Esophagus muscularis mucosa (tissue), 4 donors: ENCODE measurements at regions of chr19 and their contacts with region 1.

Region 1: GRCh38 chr19:53879140-53880081 is 2.6 kb upstream of the PRKCG start:
- DNase-seq: peak; percentile 96
- H3K4me3 ChIP-seq: peak overlapping the region; percentile 49 to 62 (median 52)
- H3K27ac ChIP-seq: no peak overlapping the region
- H3K4me1 ChIP-seq: peaks cover 28 to 72% (median 54%) of the 10 kb centered on the region in 4 donors
- H3K27me3 ChIP-seq: peaks cover 4 to 50% (median 30%) of the 10 kb centered on the region in 4 donors
- CTCF ChIP-seq: peak in 1 of 3 experiments; percentile 8
- EP300 ChIP-seq: no peak
- POLR2A ChIP-seq: no peak

Region 2: DNA sequence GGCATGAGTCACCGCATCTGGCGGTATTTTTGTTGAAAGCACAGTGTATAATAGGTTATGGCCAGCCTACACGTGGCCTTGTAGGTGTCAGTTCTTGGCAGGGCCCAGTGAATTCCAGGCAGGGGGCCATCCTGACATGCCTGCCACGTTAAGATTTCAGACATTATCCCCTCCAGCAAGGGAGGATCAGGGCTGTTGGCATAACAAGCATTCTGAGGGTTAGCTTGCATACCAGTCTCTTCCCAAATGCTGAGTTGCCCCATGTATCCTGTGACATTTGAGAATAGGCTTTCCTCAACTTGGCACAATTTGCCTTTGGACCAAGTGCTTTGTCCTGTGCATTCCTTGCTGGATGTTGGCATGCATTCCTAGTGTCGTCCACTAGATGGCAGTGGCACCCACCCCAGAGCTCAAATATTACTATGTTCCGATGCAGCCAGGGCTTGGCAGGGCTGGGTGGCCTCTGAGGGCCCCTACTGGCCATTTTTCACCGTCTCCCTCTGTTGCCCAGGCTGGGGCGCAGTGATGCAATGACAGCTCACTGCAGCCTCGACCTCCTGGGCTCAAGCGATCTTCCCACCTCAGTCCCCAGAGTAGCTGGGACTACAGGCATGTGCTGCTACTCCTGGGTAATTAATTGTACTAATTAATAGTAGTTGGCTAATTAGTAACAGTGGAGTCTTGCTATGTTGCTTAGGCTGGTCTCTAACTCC is 86.5 kb before region 1 on chr19:
- intact Hi-C with region 1: no loop called
- DNase-seq: peak; percentile 94
- H3K4me3 ChIP-seq: no peak overlapping the region
- H3K27ac ChIP-seq: no peak overlapping the region
- H3K4me1 ChIP-seq: peaks cover 0 to 8% (median 0%) of the 10 kb centered on the region in 4 donors
- H3K27me3 ChIP-seq: peaks cover 0 to 9% (median 0%) of the 10 kb centered on the region in 4 donors
- CTCF ChIP-seq: peak; percentile 94 to 98 (median 95)
- EP300 ChIP-seq: no peak
- POLR2A ChIP-seq: no peak

Region 3: DNA sequence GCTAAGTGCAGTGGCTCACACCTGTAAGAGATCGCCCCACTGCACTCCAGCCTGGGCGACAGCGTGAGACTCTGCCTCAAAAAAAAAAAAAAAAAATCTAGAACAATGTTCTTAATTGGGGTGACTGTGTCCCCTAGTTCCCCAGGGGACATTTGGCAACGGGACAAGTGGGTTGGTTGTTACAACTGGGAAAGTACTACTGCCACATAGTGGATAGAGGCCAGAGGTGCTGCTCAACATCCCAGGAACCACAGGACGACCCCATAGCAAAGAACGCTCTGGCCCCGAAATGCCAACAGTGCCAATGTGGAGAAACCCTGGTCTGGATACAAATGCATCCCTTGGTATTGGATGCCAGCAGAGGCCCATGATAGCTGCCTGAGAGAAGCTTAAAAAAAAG is 67.1 kb before region 1 on chr19:
- intact Hi-C with region 1: no loop called
- DNase-seq: no peak
- H3K4me3 ChIP-seq: no peak overlapping the region
- H3K27ac ChIP-seq: no peak overlapping the region
- H3K4me1 ChIP-seq: no peaks in the 10 kb centered on the region
- H3K27me3 ChIP-seq: peaks cover 0 to 3% (median 0%) of the 10 kb centered on the region in 4 donors
- CTCF ChIP-seq: no peak
- EP300 ChIP-seq: no peak
- POLR2A ChIP-seq: no peak

Region 4: DNA sequence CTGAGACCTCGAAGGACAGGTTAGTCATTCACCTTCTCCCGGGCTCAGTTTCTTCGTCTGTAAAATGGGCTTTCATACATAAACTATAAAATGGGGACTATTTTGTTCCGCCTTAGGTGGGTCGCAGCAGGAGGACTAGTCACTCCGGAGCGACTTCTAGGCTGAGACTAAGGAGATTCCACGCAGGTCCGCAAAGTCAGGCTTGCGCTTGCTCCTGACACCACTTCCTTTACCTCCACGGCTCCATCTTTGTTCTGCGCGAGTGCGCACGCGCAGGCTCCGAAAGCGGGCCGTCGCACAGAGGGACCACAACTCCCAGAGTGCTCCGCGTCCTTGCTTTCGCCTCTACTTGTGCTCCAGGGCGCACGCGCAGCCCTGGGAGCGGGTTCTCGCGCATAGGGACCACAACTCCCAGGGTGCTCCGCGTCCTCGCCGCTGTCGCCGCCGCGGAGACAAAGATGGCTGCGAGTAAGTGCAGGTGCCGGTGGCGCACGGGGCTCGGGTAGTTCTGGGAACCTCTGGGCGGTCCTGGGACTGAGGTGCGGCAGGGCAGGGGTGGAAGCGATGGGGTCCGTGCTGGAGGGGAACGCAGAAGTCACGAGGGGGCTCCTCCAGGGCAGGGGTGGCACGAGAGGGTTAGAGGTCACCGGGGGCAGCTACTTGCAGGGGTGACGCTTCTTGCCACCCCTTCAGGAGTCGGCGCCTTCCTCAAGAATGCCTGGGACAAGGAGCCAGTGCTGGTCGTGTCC is 223.2 kb after region 1 on chr19 and contains the start of gene NDUFA3:
- intact Hi-C with region 1: loop called (anchors 10 kb)
- DNase-seq: peak; percentile 98
- H3K4me3 ChIP-seq: peak within 1 kb of the TSS; percentile 72 to 97 (median 88)
- H3K27ac ChIP-seq: peak within 1 kb of the TSS; percentile 69 to 86 (median 80)
- H3K4me1 ChIP-seq: peaks cover 7 to 34% (median 24%) of the 10 kb centered on the region in 4 donors
- H3K27me3 ChIP-seq: no peaks in the 10 kb centered on the region
- CTCF ChIP-seq: peak in 1 of 3 experiments; percentile 10
- EP300 ChIP-seq: no peak
- POLR2A ChIP-seq: peak; percentile 64
- total RNA-seq, gene NDUFA3: 9.1 to 50.9 (median 26.4) TPM